ENCODE measurements at regions of chr16 and their contacts with region 1.

Region 1: GRCh38 chr16:29862884-29863668 is at the start of gene CDIPT:
- DNase-seq: peak; percentile 95 to 97
- ATAC-seq: peak; percentile 98 to 99 (median 99)
- H3K4me3 ChIP-seq: peak within 1 kb of the TSS; percentile 95
- H3K27ac ChIP-seq: peak within 1 kb of the TSS; percentile 85
- H3K4me1 ChIP-seq: peaks cover 10% of the 10 kb centered on the region
- H3K27me3 ChIP-seq: no peaks in the 10 kb centered on the region
- CTCF ChIP-seq: peak; percentile 39
- total RNA-seq, gene CDIPT: 24.7 to 36.4 (median 32.3) TPM

Region 2: GRCh38 chr16:29805378-29806098 is 57.5 kb before region 1 on chr16:
- intact Hi-C with region 1: no loop called
- DNase-seq: peak; percentile 98 to 99
- ATAC-seq: peak; percentile 88 to 90 (median 90)
- H3K4me3 ChIP-seq: peak overlapping the region; percentile 80
- H3K27ac ChIP-seq: peak overlapping the region; percentile 97
- H3K4me1 ChIP-seq: peaks cover 44% of the 10 kb centered on the region
- H3K27me3 ChIP-seq: no peaks in the 10 kb centered on the region
- CTCF ChIP-seq: no peak

Region 3: DNA sequence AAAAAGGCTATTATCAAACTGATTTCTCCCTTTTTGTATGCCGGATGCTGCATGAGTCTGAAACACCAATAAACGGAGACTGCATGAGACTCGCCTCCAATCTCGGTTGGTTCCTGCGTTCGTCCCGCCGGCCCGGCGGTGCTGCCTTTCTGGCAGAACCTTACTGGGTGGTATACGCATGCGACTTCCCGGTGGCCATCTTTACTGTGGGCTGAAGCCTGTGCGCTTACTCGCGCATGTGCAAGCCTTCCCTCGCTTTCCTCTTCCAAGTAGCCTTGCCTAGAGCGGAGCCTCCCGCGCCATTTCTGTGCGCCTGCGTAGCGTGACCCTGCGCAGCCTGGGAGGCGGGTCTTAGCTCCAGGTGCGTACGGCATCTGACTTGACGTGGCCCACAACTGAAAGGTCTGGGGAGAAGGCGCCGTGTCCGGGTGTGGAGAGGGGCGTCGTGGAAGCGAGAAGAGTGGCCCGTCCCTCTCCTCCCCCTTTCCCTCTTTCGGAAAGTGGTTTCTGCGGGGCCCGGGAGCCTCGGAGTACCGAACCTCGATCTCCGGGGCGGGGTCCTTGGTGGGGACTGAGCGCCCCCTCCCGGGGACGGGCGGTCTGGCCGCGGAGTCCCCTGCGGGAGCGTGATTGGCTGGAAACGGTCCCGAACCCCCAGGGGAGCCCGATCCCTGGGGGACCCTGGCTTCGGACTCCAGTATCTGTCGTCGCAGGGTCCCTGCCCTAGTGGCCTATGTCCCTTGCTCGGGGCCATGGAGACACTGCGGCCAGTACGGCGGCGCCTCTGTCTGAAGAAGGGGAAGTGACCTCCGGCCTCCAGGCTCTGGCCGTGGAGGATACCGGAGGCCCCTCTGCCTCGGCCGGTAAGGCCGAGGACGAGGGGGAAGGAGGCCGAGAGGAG is 47.0 kb before region 1 on chr16 and contains the start of gene PAGR1:
- intact Hi-C with region 1: loop called in 1 of 2 experiments (anchors 5 kb)
- DNase-seq: peak; percentile 97 to 99
- ATAC-seq: peak; percentile 84 to 87 (median 84)
- H3K4me3 ChIP-seq: peak within 1 kb of the TSS; percentile 90
- H3K27ac ChIP-seq: peak within 1 kb of the TSS; percentile 97
- H3K4me1 ChIP-seq: peaks cover 26% of the 10 kb centered on the region
- H3K27me3 ChIP-seq: no peaks in the 10 kb centered on the region
- CTCF ChIP-seq: peak; percentile 91
- total RNA-seq, gene PAGR1: 9.4 to 14.2 (median 11.0) TPM

Region 4: GRCh38 chr16:30110661-30111060 is 247.6 kb after region 1 on chr16:
- intact Hi-C with region 1: no loop called
- DNase-seq: no peak
- ATAC-seq: no peak
- H3K4me3 ChIP-seq: no peak overlapping the region
- H3K27ac ChIP-seq: no peak overlapping the region
- H3K4me1 ChIP-seq: no peaks in the 10 kb centered on the region
- H3K27me3 ChIP-seq: no peaks in the 10 kb centered on the region
- CTCF ChIP-seq: no peak